HepG2 (cell line): ENCODE measurements at regions of chr1 and their contacts with region 1.

Region 1: GRCh38 chr1:115807723-115808122 is 33.2 kb downstream of the NHLH2 start:
- DNase-seq: peak; percentile 64
- ATAC-seq: peak; percentile 75
- H3K4me3 ChIP-seq: no peak overlapping the region
- H3K27ac ChIP-seq: no peak overlapping the region
- H3K4me1 ChIP-seq: peaks cover 7% of the 10 kb centered on the region; the same call in 1 of the 2 replicates
- H3K27me3 ChIP-seq: no peaks in the 10 kb centered on the region
- CTCF ChIP-seq: peak; percentile 75
- EP300 ChIP-seq: no peak
- POLR2A ChIP-seq: no peak
- RAD21 ChIP-seq: no peak; the same call in 1 of the 2 replicates

Region 2: GRCh38 chr1:115577513-115577912 is 230.2 kb before region 1 on chr1:
- CTCF ChIA-PET with region 1: no interaction called
- POLR2A ChIA-PET with region 1: no interaction called
- in situ Hi-C with region 1: no loop called
- intact Hi-C with region 1: no loop called
- DNase-seq: no peak
- ATAC-seq: no peak
- H3K4me3 ChIP-seq: no peak overlapping the region
- H3K27ac ChIP-seq: no peak overlapping the region
- H3K4me1 ChIP-seq: no peaks in the 10 kb centered on the region
- H3K27me3 ChIP-seq: no peaks in the 10 kb centered on the region
- CTCF ChIP-seq: no peak
- EP300 ChIP-seq: no peak
- POLR2A ChIP-seq: no peak
- RAD21 ChIP-seq: no peak

Region 3: DNA sequence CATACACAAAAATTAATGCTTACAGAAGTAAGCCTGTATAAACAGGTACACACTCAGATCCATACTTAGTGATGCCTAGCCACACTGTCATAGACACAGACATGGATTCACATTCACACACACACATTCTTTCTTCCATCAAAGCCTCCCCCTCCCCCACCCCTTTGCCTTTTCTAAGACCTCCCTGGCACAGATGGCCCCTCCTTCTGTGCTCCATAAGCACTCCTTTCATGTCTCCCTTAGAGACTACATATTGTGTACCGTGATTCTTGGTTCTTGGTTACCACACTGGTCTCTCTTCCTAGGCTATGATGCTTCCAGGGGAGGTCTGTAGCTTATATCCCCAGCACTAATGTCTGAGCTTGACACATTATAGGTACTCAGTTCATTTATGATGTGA is 35.2 kb after region 1 on chr1:
- CTCF ChIA-PET with region 1: no interaction called
- POLR2A ChIA-PET with region 1: no interaction called
- in situ Hi-C with region 1: no loop called
- intact Hi-C with region 1: no loop called
- DNase-seq: no peak
- ATAC-seq: no peak
- H3K4me3 ChIP-seq: no peak overlapping the region
- H3K27ac ChIP-seq: no peak overlapping the region
- H3K4me1 ChIP-seq: no peaks in the 10 kb centered on the region
- H3K27me3 ChIP-seq: peaks cover 0 to 19% of the 10 kb centered on the region in 2 experiments; a peak in 2 of 5 replicates
- CTCF ChIP-seq: no peak
- EP300 ChIP-seq: no peak
- POLR2A ChIP-seq: no peak
- RAD21 ChIP-seq: no peak

Region 4: GRCh38 chr1:115874904-115875303 is 67.2 kb after region 1 on chr1:
- CTCF ChIA-PET with region 1: no interaction called
- POLR2A ChIA-PET with region 1: no interaction called
- in situ Hi-C with region 1: no loop called
- intact Hi-C with region 1: no loop called
- DNase-seq: no peak
- ATAC-seq: no peak
- H3K4me3 ChIP-seq: no peak overlapping the region
- H3K27ac ChIP-seq: no peak overlapping the region
- H3K4me1 ChIP-seq: no peaks in the 10 kb centered on the region
- H3K27me3 ChIP-seq: peaks cover 0 to 7% of the 10 kb centered on the region in 2 experiments; a peak in 1 of 5 replicates
- CTCF ChIP-seq: no peak
- EP300 ChIP-seq: no peak
- POLR2A ChIP-seq: no peak
- RAD21 ChIP-seq: no peak

Region 5: GRCh38 chr1:115980998-115981993 is 173.6 kb after region 1 on chr1:
- CTCF ChIA-PET with region 1: interaction called, 28 read pairs
- POLR2A ChIA-PET with region 1: interaction called, 3 read pairs
- in situ Hi-C with region 1: loop called (anchors 5 kb)
- intact Hi-C with region 1: loop called (anchors 1 kb)
- DNase-seq: peak; percentile 35
- ATAC-seq: peak; percentile 60
- H3K4me3 ChIP-seq: no peak overlapping the region
- H3K27ac ChIP-seq: no peak overlapping the region
- H3K4me1 ChIP-seq: peaks cover 25% of the 10 kb centered on the region
- H3K27me3 ChIP-seq: peaks cover 0 to 11% of the 10 kb centered on the region in 2 experiments; a peak in 3 of 5 replicates
- CTCF ChIP-seq: peak; percentile 81
- EP300 ChIP-seq: no peak
- POLR2A ChIP-seq: no peak
- RAD21 ChIP-seq: peak; percentile 60

Region 6: DNA sequence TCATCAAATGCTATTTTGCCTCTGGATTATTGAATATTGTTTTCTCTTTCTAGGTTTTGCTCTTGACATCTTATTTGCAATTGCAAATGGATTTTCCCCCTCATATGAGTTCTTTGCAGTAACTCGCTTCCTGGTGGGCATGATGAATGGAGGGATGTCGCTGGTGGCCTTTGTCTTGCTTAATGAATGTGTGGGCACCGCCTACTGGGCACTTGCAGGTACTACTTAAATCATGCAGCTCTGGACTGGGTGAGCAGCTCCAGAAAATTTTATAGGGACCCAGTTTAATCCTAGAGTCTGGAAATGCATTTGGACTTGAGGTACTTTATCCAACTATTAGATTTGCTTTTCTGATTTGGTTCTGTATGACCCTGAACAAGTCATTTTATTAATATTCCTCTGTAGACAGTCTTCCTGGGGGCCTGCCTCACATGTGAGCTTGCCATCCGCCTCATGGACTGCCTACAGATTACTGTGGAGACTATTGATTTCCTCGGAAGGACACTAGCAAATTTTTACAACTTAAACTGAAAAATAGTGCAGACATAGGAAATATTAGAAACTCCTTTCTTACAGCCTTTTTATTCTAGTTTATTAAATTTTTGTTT is 213.0 kb after region 1 on chr1:
- CTCF ChIA-PET with region 1: interaction called, 5 read pairs
- POLR2A ChIA-PET with region 1: no interaction called
- in situ Hi-C with region 1: no loop called
- intact Hi-C with region 1: loop called (anchors 1 kb)
- DNase-seq: peak; percentile 67
- ATAC-seq: peak; percentile 92
- H3K4me3 ChIP-seq: no peak overlapping the region
- H3K27ac ChIP-seq: no peak overlapping the region
- H3K4me1 ChIP-seq: no peaks in the 10 kb centered on the region
- H3K27me3 ChIP-seq: no peaks in the 10 kb centered on the region
- CTCF ChIP-seq: peak; percentile 67
- EP300 ChIP-seq: no peak
- POLR2A ChIP-seq: no peak
- RAD21 ChIP-seq: peak; percentile 27; the same call in 1 of the 2 replicates